Heart right ventricle (tissue), 16 donors: ENCODE measurements at regions of chr1 and their contacts with region 1.

Region 1: GRCh38 chr1:193951984-193952383 is 765.6 kb upstream of the B3GALT2 start:
- DNase-seq: no peak
- ATAC-seq: peak in 4 of 8 donors; percentile 29 to 57 (median 36)
- H3K4me3 ChIP-seq: no peak overlapping the region
- H3K27ac ChIP-seq: peak overlapping the region in 8 of 10 donors; percentile 41 to 73 (median 52)
- H3K4me1 ChIP-seq: peaks cover 0 to 13% (median 0%) of the 10 kb centered on the region in 9 donors
- H3K27me3 ChIP-seq: no peaks in the 10 kb centered on the region
- CTCF ChIP-seq: no peak

Region 2: DNA sequence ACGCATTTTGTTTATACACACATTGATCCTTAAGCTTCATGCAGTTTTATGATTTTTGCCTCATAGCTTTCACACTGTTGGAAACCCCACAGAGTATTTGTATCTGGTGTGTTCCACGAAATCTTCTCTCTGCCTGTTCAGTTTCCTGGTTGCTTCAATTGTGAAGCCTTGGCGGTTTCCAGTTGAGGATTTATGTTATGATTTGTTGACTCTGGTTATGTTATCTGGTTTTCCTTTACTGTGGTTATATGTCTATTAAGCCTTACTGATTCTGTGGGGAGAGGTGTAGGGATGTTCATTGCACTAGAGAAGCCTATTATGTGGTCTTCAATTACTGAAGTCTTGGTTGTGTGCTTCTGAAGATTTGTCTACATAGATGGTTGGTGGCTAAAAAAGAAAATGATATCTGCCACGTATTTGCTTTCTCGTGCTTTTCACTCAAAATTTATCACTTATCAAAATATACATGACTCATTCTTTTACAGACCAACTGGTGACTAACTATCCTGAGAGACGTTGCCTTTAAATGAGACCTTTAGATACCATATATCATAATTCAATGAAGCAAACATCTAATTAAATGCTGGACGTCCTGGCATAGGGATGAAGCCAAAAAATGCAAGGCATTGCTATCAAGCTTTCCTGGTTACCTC is 277.6 kb before region 1 on chr1:
- intact Hi-C with region 1: loop called in 1 of 10 experiments (anchors 10 kb)
- DNase-seq: no peak
- ATAC-seq: no peak
- H3K4me3 ChIP-seq: no peak overlapping the region
- H3K27ac ChIP-seq: no peak overlapping the region
- H3K4me1 ChIP-seq: no peaks in the 10 kb centered on the region
- H3K27me3 ChIP-seq: no peaks in the 10 kb centered on the region
- CTCF ChIP-seq: no peak

Region 3: GRCh38 chr1:193827516-193827915 is 124.5 kb before region 1 on chr1:
- intact Hi-C with region 1: no loop called
- DNase-seq: no peak
- ATAC-seq: no peak
- H3K4me3 ChIP-seq: no peak overlapping the region
- H3K27ac ChIP-seq: no peak overlapping the region
- H3K4me1 ChIP-seq: no peaks in the 10 kb centered on the region
- H3K27me3 ChIP-seq: no peaks in the 10 kb centered on the region
- CTCF ChIP-seq: no peak